AG04449 (cell line): ENCODE measurements at regions of chr9 and their contacts with region 1.

Region 1: DNA sequence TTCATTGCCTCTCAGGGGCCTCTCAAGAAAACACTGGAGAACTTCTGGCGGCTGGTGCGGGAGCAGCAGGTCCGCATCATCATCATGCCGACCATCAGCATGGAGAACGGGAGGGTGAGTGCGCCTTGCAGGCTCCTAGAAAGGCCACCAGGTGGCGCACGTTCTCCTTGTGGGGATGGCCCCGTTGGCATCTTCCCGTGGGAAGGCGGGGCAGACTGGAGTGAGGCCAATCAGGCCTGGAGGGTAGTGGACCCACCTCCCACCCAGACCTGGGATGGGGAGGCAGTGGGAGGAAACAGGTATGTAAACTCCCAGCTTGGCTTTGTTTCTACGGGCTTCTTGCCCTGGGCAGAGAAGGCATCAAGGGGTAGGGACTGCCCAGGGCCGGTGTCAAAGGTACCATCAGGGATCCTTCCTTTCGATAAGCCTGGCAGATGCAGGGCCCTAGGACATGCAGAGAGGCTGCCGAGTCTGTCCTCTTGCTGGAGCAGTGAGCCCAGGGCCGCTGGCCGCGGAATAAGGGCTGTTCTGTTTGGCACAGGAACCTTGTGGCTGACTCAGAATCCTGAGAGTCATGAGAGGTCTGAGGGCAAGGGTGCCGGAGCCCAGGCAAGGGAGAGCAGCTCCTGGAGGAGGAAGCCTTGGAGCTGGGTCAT is 18.9 kb upstream of the SPTLC1 start:
- DNase-seq: no peak
- H3K4me3 ChIP-seq: peak overlapping the region; percentile 24
- CTCF ChIP-seq: peak; percentile 98

Region 2: GRCh38 chr9:92122800-92123199 is 11.3 kb before region 1 on chr9:
- CTCF ChIA-PET with region 1: interaction called, 49 read pairs
- POLR2A ChIA-PET with region 1: no interaction called
- DNase-seq: no peak
- H3K4me3 ChIP-seq: no peak overlapping the region
- CTCF ChIP-seq: no peak

Region 3: DNA sequence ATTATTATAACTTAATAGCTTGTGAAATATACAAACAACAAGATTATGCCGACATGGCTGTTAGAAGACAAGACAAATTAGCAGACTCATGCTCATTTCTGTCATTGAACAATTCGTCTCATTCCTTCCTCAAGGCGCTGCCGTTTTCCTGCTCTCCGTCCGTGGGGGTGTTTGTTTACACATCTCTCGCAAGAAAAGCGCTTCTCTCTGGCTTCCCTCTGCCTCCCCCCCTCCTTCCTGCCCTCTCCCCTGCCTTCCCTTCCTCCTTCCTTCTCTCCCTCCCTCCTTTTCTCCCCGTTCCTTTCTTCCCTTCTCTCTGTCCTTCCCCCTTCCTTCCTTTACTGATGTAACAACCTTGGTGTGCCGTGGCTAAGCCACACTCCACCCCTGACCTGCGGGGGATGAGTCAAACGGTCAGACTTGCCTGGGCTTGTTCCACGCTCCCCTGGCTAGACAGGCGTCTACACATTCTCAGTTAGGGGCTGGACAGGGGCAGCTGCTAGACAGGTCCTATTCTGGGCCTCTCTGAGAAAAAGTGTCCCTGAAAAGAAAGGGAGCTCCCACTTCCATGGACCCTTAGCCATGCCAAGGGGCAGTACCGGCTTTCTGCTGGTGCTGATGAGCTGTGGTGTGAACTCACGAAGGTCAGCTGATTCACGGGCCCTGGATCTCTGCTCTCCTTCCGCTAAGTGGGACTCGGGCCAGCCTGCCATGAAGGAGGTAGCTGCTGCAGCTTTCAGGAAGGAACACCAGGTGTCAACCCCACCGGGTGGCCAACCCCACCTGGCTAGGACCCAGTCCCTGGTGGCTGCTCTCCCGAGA is 13.2 kb after region 1 on chr9:
- CTCF ChIA-PET with region 1: interaction called, 53 read pairs
- POLR2A ChIA-PET with region 1: no interaction called
- DNase-seq: peak; percentile 47
- H3K4me3 ChIP-seq: no peak overlapping the region
- CTCF ChIP-seq: peak; percentile 22